ENCODE measurements at regions of chr1 and their contacts with region 1.

Region 1: GRCh38 chr1:975896-976683 is 5.8 kb downstream of the PERM1 start:
- DNase-seq: peak; percentile 78
- H3K4me3 Mint-ChIP-seq: no peak overlapping the region
- H3K27ac Mint-ChIP-seq: no peak overlapping the region
- H3K4me1 Mint-ChIP-seq: peaks cover 12% of the 10 kb centered on the region
- H3K27me3 Mint-ChIP-seq: peaks cover 2% of the 10 kb centered on the region

Region 2: DNA sequence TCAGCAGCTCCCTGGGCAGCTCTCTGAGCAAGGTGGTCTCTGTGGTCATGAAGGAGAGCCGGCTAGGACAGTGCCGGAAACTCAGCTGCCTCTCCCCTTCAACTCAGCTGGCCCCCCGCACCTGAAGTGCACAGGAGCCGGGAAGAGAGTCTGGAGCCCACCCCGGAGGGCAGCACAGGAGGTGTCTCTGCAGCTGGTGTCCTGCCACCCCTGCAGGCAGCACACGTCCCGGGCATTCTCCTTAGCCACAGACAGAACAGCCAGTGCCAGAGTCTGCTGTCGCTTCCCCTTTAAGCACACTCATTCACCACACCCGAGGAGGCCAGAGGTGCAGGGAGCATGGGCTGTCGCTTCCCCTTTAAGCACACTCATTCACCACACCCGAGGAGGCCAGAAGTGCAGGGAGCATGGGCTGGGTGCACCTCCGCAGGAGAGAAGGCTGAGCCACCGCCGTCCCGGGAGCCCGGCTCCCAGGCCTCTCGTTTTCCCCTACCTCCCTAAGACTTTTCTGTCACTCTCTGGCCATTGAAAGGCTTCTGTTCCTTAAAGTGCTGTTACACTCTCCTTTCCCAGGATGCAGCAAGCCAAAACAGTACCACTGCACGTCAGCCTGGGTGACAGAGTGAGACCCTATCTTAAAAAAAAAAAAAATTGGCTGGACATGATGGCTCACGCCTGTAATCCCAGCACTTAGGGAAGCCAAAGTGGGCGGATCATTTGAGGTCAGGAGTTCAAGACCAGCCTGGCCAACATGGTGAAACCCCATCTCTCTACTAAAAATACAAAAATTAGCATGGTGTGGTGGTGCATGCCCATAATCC is 69.3 kb before region 1 on chr1:
- CTCF ChIA-PET with region 1: interaction called, 11 read pairs
- POLR2A ChIA-PET with region 1: no interaction called
- DNase-seq: peak; percentile 16
- H3K4me3 Mint-ChIP-seq: no peak overlapping the region
- H3K27ac Mint-ChIP-seq: no peak overlapping the region
- H3K4me1 Mint-ChIP-seq: peaks cover 10% of the 10 kb centered on the region
- H3K27me3 Mint-ChIP-seq: peaks cover 48% of the 10 kb centered on the region

Measured in activated CD4-positive, alpha-beta memory T cell treated with anti-CD3 and anti-CD28 coated beads, Interleukin-2, amount 10 ng/mL, durations not matched to agents 7 days and 5 days (primary cell).